ENCODE measurements at regions of chr11 and their contacts with region 1.

Region 1: GRCh38 chr11:57249384-57250319 is 12.6 kb upstream of the APLNR start:
- DNase-seq: peak; percentile 82
- ATAC-seq: peak; percentile 75

Region 2: GRCh38 chr11:56841210-56841810 is 408.3 kb before region 1 on chr11:
- intact Hi-C with region 1: loop called (anchors 2 kb)
- DNase-seq: no peak
- ATAC-seq: peak; percentile 50

Region 3: DNA sequence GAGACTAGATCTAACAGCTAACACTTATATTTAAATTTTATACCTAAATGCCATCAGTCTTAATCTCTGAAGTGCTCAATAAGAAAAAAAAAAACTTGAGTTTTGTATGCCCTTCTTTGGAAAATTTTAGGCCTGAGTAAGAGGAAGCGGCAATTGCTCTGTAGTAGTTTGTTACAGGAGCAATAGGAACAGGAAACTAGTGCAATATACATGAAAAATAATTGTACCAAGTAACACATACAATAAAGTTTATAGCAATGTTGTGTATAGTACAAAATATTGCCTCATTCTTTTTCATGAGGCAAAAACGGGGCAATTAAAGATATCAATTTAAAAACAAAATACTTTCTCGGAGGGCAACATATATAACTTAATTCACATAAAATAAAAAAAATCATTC is 241.3 kb before region 1 on chr11:
- intact Hi-C with region 1: no loop called
- DNase-seq: no peak
- ATAC-seq: no peak

Region 4: DNA sequence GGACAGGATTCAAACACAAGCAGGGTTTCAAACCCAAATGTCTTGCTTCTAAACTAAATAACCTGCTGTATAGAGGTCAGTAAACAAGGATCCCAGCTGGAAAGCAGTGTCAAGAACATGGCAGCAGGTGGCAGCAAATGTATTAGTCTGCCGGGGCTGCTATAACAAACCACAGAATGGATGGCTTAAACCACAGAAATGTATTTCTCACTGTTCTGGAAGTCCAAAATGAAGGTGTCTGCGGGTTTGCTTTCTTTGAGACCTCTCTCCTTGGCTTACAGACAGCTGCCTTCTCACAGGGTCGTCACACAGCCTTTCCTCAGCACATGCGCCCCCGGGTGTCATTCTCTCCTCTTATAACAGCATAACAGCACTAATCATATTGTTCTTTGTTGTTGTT is 133.0 kb before region 1 on chr11:
- intact Hi-C with region 1: loop called (anchors 10 kb)
- DNase-seq: no peak
- ATAC-seq: peak; percentile 52

Region 5: GRCh38 chr11:57131080-57131790 is 118.4 kb before region 1 on chr11:
- intact Hi-C with region 1: loop called (anchors 5 kb)
- DNase-seq: peak; percentile 38
- ATAC-seq: peak; percentile 69

Region 6: DNA sequence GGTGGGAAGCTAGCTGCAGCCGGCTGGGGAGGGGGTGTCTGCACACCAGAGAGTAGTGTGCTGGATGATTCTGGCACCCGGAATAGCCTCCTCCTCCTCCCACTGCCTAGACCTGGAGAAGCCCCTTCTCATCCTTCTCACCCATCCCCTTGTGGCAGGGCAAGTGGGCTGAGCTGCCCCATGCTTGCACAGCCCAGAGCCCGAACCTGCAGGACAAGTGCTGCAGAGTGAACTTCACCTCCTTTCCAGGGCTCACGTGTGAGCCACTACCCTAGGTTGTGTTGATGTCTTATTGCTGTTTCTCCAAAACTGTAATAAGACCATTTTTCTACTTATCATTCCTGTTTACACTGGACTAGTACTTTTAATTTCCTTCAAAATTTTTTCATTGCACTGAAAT is 1780.4 kb after region 1 on chr11:
- intact Hi-C with region 1: no loop called
- DNase-seq: no peak
- ATAC-seq: no peak